ENCODE measurements at regions of chr7 and their contacts with region 1.

Region 1: DNA sequence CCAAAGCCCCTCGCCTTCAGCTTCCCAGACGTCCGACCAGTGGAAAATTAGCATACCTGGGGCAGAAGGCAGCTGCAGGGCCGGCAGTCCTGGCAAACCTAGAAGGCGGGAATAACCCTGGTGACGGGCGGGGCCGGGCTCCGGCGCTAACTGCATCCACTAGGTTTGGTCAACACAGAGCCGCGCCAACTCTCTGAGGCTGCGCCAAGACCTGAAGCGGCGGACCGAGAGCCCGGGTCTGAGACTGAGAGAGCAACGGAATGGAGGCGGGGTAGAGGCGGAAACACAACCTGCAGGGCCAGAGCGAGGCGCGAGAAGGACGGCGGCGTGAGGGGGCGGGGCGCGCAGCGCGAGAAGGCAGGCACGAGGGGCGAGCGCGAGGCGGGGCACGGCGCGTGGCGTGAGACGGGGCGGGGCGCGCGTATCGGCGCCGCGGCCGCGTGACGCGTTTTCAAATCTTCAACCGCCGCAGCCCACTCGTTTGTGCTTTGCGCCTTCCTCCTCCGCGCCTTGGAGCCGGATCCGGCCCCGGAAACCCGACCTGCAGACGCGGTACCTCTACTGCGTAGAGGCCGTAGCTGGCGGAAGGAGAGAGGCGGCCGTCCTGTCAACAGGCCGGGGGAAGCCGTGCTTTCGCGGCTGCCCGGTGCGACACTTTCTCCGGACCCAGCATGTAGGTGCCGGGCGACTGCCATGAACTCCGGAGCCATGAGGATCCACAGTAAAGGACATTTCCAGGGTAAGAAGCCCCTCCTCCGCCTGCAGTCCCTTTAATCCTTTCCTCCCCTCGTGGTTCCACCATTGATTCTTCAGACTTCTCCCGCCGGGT is at the starts of genes DBF4 and SLC25A40:
- DNase-seq: peak; percentile 98
- ATAC-seq: peak; percentile 91
- H3K4me3 Mint-ChIP-seq: peak within 1 kb of the TSS; percentile 95
- H3K27ac Mint-ChIP-seq: peak within 1 kb of the TSS; percentile 96
- H3K4me1 Mint-ChIP-seq: peaks cover 43% of the 10 kb centered on the region
- H3K27me3 Mint-ChIP-seq: no peaks in the 10 kb centered on the region
- CTCF ChIP-seq: no peak
- total RNA-seq, gene DBF4: 20.2 and 30.3 TPM in 2 replicates
- total RNA-seq, gene SLC25A40: 16.6 and 21.7 TPM in 2 replicates

Region 2: DNA sequence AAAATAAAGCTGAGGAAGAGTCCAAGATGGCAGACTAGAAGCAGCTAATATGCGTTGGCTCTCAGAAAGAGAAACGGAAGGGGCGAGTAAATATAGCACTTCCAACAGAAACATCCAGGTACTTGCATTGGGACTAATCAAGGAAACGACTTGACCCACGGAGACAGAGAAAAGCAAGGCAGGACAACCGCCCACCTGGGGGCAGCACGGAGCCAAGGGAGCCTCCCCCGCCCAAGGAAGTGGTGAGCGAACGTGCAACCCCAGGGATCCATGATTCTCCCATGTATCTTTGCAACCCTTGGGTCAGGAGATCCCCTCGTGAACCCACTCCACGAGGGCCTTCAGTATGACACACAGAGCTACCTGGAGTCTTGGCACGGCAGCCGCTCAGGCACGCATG is 1277.9 kb before region 1 on chr7:
- CTCF ChIA-PET with region 1: no interaction called
- POLR2A ChIA-PET with region 1: no interaction called
- intact Hi-C with region 1: no loop called
- DNase-seq: no peak
- ATAC-seq: no peak
- H3K4me3 Mint-ChIP-seq: no peak overlapping the region
- H3K27ac Mint-ChIP-seq: no peak overlapping the region
- H3K4me1 Mint-ChIP-seq: no peaks in the 10 kb centered on the region
- H3K27me3 Mint-ChIP-seq: no peaks in the 10 kb centered on the region
- CTCF ChIP-seq: no peak

Region 3: GRCh38 chr7:87059525-87060287 is 816.5 kb before region 1 on chr7 and contains the start of gene ELAPOR2:
- CTCF ChIA-PET with region 1: no interaction called
- POLR2A ChIA-PET with region 1: no interaction called
- intact Hi-C with region 1: loop called (anchors 5 kb)
- DNase-seq: peak; percentile 94
- ATAC-seq: peak; percentile 96
- H3K4me3 Mint-ChIP-seq: peak within 1 kb of the TSS; percentile 88
- H3K27ac Mint-ChIP-seq: peak within 1 kb of the TSS; percentile 77
- H3K4me1 Mint-ChIP-seq: peaks cover 14% of the 10 kb centered on the region
- H3K27me3 Mint-ChIP-seq: no peaks in the 10 kb centered on the region
- CTCF ChIP-seq: no peak
- total RNA-seq, gene ELAPOR2: 4.5 and 5.1 TPM in 2 replicates

Region 4: GRCh38 chr7:87345166-87345927 is 530.9 kb before region 1 on chr7 and contains the start of gene CROT:
- CTCF ChIA-PET with region 1: no interaction called
- POLR2A ChIA-PET with region 1: no interaction called
- intact Hi-C with region 1: loop called (anchors 1 kb)
- DNase-seq: peak; percentile 95
- ATAC-seq: peak; percentile 98
- H3K4me3 Mint-ChIP-seq: peak within 1 kb of the TSS; percentile 96
- H3K27ac Mint-ChIP-seq: peak within 1 kb of the TSS; percentile 96
- H3K4me1 Mint-ChIP-seq: peaks cover 25% of the 10 kb centered on the region
- H3K27me3 Mint-ChIP-seq: no peaks in the 10 kb centered on the region
- CTCF ChIP-seq: no peak
- total RNA-seq, gene CROT: 7.9 and 9.2 TPM in 2 replicates

Region 5: GRCh38 chr7:87628780-87629569 is 247.3 kb before region 1 on chr7:
- CTCF ChIA-PET with region 1: no interaction called
- POLR2A ChIA-PET with region 1: no interaction called
- intact Hi-C with region 1: loop called (anchors 1 kb)
- DNase-seq: peak; percentile 44
- ATAC-seq: peak; percentile 18
- H3K4me3 Mint-ChIP-seq: peak overlapping the region; percentile 83
- H3K27ac Mint-ChIP-seq: no peak overlapping the region
- H3K4me1 Mint-ChIP-seq: peaks cover 11% of the 10 kb centered on the region
- H3K27me3 Mint-ChIP-seq: peaks cover 8% of the 10 kb centered on the region
- CTCF ChIP-seq: no peak

Region 6: DNA sequence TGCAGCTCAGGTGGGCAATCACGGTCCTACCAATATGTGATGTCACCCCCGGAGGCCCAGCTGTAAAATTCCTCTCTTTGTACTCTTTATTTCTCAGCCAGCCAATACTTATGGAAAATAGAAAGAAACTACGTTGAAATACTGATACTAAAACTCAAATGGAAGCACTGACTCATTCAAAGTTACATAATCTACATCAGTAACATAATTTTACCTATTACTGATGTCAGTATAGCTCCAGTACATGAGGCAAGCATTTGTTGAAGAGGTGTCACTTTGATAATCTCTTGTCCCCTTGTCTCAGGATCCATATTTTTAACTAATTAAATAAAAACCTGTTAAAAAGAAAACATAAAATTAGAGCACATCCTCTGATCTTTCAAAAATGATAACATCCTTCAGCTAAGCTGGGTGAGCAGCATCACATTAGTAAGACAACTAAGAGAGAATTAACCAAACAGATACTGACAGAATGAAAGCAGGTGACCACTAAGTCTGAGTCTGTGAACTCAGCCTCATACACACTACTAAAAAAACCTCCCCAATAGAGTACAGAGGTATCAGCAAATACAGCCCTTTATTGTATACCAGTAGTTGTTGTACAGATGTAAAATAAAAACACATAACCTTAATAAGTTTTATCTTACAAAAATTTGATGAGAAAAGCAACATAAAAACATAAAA is 17.7 kb before region 1 on chr7:
- CTCF ChIA-PET with region 1: no interaction called
- POLR2A ChIA-PET with region 1: interaction called, 6 read pairs
- intact Hi-C with region 1: loop called (anchors 2 kb)
- DNase-seq: no peak
- ATAC-seq: no peak
- H3K4me3 Mint-ChIP-seq: no peak overlapping the region
- H3K27ac Mint-ChIP-seq: no peak overlapping the region
- H3K4me1 Mint-ChIP-seq: peaks cover 4% of the 10 kb centered on the region
- H3K27me3 Mint-ChIP-seq: no peaks in the 10 kb centered on the region
- CTCF ChIP-seq: no peak

Region 7: DNA sequence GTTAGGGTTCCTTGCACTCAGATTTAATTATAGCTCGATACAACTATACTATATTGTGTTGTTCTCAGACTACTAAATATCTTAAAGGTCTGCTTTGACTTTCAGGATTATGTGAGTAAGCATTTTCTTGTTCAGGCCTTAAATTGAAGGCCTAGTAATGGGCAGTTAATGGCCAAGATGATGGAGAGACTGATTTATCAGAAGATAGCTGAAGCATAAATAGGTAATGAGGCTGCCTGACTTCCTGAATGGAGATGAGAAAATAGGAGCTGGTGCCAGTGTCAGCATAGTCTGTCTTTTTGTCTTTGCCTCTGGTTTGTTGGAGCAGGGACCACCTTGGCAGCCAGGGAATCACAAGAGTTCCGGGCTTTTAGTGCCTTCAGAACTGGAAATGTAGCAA is 90.0 kb after region 1 on chr7:
- CTCF ChIA-PET with region 1: no interaction called
- POLR2A ChIA-PET with region 1: no interaction called
- intact Hi-C with region 1: no loop called
- DNase-seq: no peak
- ATAC-seq: no peak
- H3K4me3 Mint-ChIP-seq: no peak overlapping the region
- H3K27ac Mint-ChIP-seq: no peak overlapping the region
- H3K4me1 Mint-ChIP-seq: no peaks in the 10 kb centered on the region
- H3K27me3 Mint-ChIP-seq: no peaks in the 10 kb centered on the region
- CTCF ChIP-seq: no peak

Region 8: GRCh38 chr7:88020953-88021665 is 144.9 kb after region 1 on chr7:
- CTCF ChIA-PET with region 1: no interaction called
- POLR2A ChIA-PET with region 1: no interaction called
- intact Hi-C with region 1: no loop called
- DNase-seq: no peak
- ATAC-seq: no peak
- H3K4me3 Mint-ChIP-seq: no peak overlapping the region
- H3K27ac Mint-ChIP-seq: no peak overlapping the region
- H3K4me1 Mint-ChIP-seq: no peaks in the 10 kb centered on the region
- H3K27me3 Mint-ChIP-seq: no peaks in the 10 kb centered on the region
- CTCF ChIP-seq: no peak

Region 9: DNA sequence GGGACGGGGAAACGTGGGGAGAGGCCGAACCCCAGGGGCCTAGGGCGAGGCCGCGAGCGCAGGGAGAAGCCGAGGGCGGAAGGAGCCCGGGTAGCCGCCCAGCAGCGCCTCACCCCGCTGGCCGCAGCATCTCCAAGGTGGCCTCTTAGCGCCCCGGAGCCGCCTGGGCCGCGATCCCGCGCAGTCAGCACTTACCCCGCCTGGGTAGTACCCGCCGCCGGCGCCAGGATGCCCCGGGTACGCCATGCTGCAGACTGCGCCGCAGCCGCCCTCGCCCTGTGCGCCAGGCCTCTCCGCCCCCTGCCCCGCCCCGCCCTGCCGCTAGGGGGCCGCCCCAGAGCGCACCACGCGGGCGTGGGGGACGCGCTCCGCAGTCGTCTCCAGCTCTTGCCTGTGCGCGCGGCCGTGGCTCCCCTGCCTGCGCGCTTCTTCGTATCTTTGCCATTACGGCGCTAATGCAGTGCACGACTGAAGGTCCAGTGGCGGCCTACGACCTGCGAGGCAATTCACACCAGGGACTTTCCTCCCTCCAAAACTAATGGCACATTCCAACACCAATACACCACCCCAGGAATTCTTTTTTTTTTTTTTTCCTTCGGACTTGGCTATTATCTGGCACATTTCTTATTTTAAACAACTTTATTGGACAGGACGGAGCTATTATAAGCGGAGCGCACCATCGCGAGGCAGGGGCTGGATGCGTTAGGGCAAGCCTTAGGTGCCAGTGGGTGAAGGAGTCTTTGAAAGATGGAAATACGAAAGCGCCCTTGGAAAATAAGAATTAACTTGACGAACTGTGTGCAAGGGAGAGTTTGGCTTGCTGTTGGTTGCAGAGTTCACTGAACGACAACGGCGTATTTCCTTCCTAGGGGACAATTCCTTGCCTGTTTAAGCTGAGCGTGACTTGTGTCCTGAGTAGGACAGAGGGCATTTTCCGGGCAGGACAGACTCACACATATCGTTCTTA is 343.8 kb after region 1 on chr7 and contains the start of gene SRI:
- CTCF ChIA-PET with region 1: no interaction called
- POLR2A ChIA-PET with region 1: interaction called, 4 read pairs
- intact Hi-C with region 1: loop called (anchors 1 kb)
- DNase-seq: peak; percentile 94
- ATAC-seq: peak; percentile 96
- H3K4me3 Mint-ChIP-seq: peak within 1 kb of the TSS; percentile 95
- H3K27ac Mint-ChIP-seq: peak within 1 kb of the TSS; percentile 92
- H3K4me1 Mint-ChIP-seq: peaks cover 25% of the 10 kb centered on the region
- H3K27me3 Mint-ChIP-seq: no peaks in the 10 kb centered on the region
- CTCF ChIP-seq: peak; percentile 73
- total RNA-seq, gene SRI: 97.4 and 101 TPM in 2 replicates

Region 10: GRCh38 chr7:88686468-88687229 is 810.4 kb after region 1 on chr7:
- CTCF ChIA-PET with region 1: no interaction called
- POLR2A ChIA-PET with region 1: no interaction called
- intact Hi-C with region 1: no loop called
- DNase-seq: no peak
- ATAC-seq: no peak
- H3K4me3 Mint-ChIP-seq: no peak overlapping the region
- H3K27ac Mint-ChIP-seq: no peak overlapping the region
- H3K4me1 Mint-ChIP-seq: no peaks in the 10 kb centered on the region
- H3K27me3 Mint-ChIP-seq: no peaks in the 10 kb centered on the region
- CTCF ChIP-seq: no peak